ENCODE measurements at regions of chr11 and their contacts with region 1.

Region 1: GRCh38 chr11:6719576-6719975 is 36.4 kb upstream of the MRPL17 start:
- DNase-seq: no peak
- ATAC-seq: peak; percentile 38

Region 2: GRCh38 chr11:6489306-6489705 is 230.3 kb before region 1 on chr11:
- intact Hi-C with region 1: no loop called
- DNase-seq: no peak
- ATAC-seq: no peak

Region 3: DNA sequence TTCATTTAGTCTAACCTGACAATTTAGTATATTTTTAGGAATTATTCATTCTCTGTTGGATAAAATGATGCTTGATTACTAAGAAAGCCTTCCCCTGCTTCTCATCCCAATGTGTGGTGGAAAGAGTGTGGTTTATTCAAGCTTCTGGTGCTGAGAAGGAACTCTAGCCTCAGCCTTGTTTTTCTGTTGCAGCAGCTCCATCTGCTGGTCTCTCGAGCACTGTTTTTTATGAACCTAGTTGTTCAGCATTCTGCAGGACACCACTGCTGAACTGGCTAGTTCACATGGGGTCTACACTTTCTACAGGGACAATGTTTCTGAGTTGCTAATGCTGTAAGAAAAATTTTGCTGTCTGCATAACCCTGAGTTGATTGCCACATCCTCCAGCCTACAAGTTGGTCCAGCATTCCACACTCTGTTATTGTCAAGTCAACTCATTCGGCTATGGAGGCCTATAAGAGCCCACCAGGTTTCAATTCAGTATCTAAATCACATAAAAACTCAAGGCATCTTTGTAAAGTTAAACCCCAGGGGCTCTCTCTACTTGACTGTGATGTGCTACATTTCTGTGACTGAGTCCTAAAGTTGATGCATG is 37.9 kb after region 1 on chr11:
- intact Hi-C with region 1: no loop called
- DNase-seq: no peak
- ATAC-seq: peak; percentile 71

Region 4: GRCh38 chr11:6771926-6772893 is 52.6 kb after region 1 on chr11 and contains the start of gene OR2AG2:
- intact Hi-C with region 1: loop called (anchors 10 kb)
- DNase-seq: no peak
- ATAC-seq: no peak
- total RNA-seq, gene OR2AG2: not detected

Region 5: DNA sequence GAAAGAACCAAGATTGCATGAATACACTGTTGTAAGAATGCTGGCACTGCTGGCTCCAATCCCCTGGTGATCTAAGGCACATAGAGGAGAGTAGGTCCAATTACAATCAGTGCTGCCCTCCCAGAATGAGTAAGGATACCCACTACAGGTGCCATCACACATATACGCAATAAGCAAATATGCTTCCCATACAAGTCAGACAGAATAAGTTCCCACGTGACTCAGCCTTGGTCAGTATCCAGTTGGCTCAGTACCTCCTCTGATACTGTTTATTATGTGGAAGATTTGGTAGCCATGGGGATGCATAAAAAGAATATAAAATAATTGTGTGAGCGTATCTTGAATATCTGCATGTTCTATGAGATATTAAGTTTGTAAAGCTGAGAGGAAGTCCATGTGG is 192.4 kb after region 1 on chr11:
- intact Hi-C with region 1: no loop called
- DNase-seq: no peak
- ATAC-seq: no peak

Region 6: GRCh38 chr11:7060868-7061267 is 341.3 kb after region 1 on chr11:
- intact Hi-C with region 1: no loop called
- DNase-seq: no peak
- ATAC-seq: peak; percentile 86

Measured in Right ventricle myocardium superior (tissue), 1 donor.